Dendritic cell treated with granulocyte-macrophage colony-stimulating factor and Interleukin-4, amounts not matched to agents 40 ng/mL and 50 ng/mL, for 4 days (primary cell): ENCODE measurements at regions of chr1 and their contacts with region 1.

Region 1: DNA sequence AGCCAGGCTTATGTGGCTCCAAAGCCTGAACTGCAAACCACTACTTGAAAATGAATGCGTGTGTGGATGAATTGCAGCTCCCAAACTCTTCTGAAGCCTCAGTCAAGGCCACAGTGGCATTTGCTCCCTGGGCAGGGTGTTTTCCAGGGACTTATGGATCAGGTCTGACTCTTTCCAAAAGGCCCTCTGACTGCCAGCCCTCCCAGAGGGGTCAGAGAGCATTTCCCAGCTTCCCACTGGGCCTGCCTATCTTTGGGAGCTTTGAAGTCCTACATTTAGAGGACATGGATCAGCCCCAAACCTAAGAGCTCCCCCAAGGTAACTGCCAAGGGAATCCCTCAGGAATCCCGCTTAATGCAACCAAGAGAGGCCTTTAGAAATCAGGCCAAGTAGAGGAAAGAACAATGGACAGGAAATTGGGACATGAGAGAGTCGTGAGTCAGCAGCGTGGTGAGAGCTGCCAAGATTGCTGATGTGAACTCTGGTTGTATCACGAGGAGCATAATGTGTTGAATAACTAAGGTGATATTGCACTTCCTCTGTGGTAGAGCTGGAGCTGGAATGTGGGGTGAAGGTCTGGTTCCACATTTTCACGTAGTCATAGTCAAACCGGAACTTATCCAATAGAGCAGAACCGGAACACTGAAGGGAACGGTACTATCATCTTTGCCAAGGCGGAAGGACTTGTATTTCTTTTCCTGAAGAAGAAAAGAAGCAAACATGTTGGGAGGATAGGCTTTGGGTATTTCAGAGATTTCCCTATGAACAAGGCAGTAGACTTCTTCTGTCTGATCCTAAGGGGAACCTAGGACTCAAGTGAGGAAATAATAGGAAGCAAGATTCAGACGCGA is 99.4 kb upstream of the JUN start:
- H3K4me3 Mint-ChIP-seq: no peak overlapping the region
- H3K27ac Mint-ChIP-seq: peak overlapping the region; percentile 67
- H3K4me1 Mint-ChIP-seq: peaks cover 85% of the 10 kb centered on the region
- H3K27me3 Mint-ChIP-seq: no peaks in the 10 kb centered on the region

Region 2: GRCh38 chr1:58816072-58816746 is 67.1 kb before region 1 on chr1:
- intact Hi-C with region 1: loop called (anchors 5 kb)
- H3K4me3 Mint-ChIP-seq: peak overlapping the region; percentile 85
- H3K27ac Mint-ChIP-seq: peak overlapping the region; percentile 92
- H3K4me1 Mint-ChIP-seq: peaks cover 75% of the 10 kb centered on the region
- H3K27me3 Mint-ChIP-seq: no peaks in the 10 kb centered on the region

Region 3: GRCh38 chr1:58827298-58827697 is 56.0 kb before region 1 on chr1:
- intact Hi-C with region 1: no loop called
- H3K4me3 Mint-ChIP-seq: no peak overlapping the region
- H3K27ac Mint-ChIP-seq: no peak overlapping the region
- H3K4me1 Mint-ChIP-seq: peaks cover 35% of the 10 kb centered on the region
- H3K27me3 Mint-ChIP-seq: no peaks in the 10 kb centered on the region

Region 4: DNA sequence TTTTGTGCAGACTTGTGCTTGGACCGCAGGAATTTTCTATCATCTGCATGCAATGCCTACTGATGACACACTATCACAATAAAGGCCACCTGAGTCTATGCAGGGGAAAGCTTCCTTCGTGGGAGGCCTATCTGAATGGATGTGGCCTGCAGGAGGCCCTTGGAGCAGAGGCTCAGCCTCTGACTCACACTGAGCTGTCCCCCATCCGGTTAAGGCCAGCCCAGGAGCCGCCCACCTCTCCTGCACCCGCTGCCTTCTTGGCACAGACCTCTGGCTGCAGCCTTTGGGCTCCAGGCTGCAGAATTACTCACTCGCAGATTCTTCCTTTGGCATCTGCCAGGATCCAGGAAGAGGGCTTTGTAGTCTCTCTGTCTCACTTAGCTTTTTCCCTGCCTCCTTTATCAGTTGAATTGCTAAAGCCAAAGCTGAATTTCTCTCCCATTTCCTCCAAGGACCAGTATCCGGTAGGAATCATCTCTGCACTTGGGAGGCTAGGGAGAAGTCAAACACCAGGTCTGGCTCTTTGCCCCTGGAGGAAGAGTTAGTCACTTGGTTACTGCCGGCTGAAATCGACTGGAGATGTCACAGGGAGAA is 34.3 kb before region 1 on chr1:
- intact Hi-C with region 1: no loop called
- H3K4me3 Mint-ChIP-seq: no peak overlapping the region
- H3K27ac Mint-ChIP-seq: no peak overlapping the region
- H3K4me1 Mint-ChIP-seq: peaks cover 14% of the 10 kb centered on the region
- H3K27me3 Mint-ChIP-seq: peaks cover 2% of the 10 kb centered on the region

Region 5: GRCh38 chr1:58903514-58904298 is 20.4 kb after region 1 on chr1:
- intact Hi-C with region 1: loop called (anchors 2 kb)
- H3K4me3 Mint-ChIP-seq: peak overlapping the region; percentile 75
- H3K27ac Mint-ChIP-seq: peak overlapping the region; percentile 95
- H3K4me1 Mint-ChIP-seq: peaks cover 69% of the 10 kb centered on the region
- H3K27me3 Mint-ChIP-seq: no peaks in the 10 kb centered on the region